ENCODE measurements at regions of chr21 and their contacts with region 1.

Region 1: DNA sequence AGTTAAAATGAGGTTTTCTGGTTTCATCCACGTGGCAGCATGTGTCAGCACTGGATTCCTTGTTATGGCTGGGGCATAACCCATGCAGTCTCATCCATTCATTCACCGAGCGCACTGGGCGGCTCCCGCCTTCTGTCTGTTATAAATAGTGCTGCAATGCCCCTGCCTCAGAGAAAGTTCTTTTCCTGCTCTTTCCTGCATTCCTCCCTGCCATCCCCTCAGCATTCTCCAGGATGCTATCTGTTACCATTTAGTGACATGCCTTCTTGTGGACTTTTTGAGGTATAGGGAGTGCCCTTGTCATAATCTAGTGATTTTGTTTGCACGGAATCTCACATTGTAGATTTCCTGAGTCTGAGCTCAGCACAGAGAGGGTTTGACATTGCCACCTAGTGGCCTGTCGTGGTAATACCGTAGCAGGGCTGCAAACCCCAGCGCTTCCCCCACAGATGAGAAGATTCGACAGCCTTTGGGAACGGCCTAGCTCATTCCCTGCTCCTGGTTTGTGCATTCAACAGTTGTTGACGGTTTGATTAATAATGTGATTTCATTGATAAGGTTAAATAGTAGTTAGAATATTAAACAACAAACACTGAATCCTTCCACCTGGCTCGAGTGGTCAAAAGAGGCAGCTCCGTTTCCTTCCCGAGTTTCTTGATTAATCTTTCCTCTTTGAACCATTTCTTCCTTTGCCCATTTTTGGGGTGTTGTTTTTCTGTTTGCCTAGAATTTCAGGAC is 46.3 kb downstream of the UMODL1 start:
- DNase-seq: peak; percentile 49 to 80 (median 59)
- H3K4me3 ChIP-seq: no peak overlapping the region
- H3K4me3 Mint-ChIP-seq: peak overlapping the region in 3 of 7 donors; percentile 19 to 61 (median 55)
- H3K27ac ChIP-seq: no peak overlapping the region
- H3K27ac Mint-ChIP-seq: no peak overlapping the region
- H3K4me1 ChIP-seq: peaks cover 4% of the 10 kb centered on the region
- H3K4me1 Mint-ChIP-seq: peaks cover 5 to 11% (median 7%) of the 10 kb centered on the region in 3 donors
- H3K27me3 ChIP-seq: peaks cover 49% of the 10 kb centered on the region
- H3K27me3 Mint-ChIP-seq: peaks cover 32 to 86% of the 10 kb centered on the region in 2 donors

Region 2: DNA sequence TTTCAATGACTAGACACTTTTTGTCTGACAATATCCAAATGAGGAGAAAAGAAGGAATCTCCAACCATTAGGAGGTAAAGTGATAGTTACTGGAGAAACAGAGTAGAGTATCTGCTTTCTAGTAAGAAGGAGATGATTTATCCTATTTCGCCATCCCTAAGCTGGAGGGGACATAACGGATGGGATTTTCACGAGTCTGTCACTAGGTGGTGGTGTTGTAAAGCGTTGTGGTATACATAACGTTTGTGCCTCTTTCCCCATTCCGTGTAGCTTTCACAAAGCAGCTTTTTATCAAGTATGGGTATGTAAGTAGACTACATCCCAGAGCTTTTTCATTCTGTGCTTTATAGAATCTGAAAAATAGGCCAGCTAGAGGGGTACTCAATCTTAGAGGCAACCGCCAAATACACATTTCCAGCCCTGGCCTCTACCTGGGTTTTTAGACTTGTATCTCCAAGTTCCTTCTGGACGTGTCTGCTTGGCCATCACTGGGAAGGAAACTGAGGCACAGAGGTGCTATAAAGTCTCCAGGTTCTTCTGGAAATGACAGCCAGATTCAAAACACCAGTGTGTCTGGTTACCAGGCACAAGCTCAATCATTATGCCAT is 834.1 kb before region 1 on chr21:
- CTCF ChIA-PET with region 1: interaction called, 13 read pairs
- POLR2A ChIA-PET with region 1: no interaction called
- DNase-seq: peak in 4 of 5 donors; percentile 15 to 64 (median 56)
- H3K4me3 ChIP-seq: no peak overlapping the region
- H3K4me3 Mint-ChIP-seq: no peak overlapping the region
- H3K27ac ChIP-seq: no peak overlapping the region
- H3K27ac Mint-ChIP-seq: no peak overlapping the region
- H3K4me1 ChIP-seq: no peaks in the 10 kb centered on the region
- H3K4me1 Mint-ChIP-seq: no peaks in the 10 kb centered on the region
- H3K27me3 ChIP-seq: no peaks in the 10 kb centered on the region
- H3K27me3 Mint-ChIP-seq: peaks cover 6 to 32% of the 10 kb centered on the region in 2 donors

Region 3: DNA sequence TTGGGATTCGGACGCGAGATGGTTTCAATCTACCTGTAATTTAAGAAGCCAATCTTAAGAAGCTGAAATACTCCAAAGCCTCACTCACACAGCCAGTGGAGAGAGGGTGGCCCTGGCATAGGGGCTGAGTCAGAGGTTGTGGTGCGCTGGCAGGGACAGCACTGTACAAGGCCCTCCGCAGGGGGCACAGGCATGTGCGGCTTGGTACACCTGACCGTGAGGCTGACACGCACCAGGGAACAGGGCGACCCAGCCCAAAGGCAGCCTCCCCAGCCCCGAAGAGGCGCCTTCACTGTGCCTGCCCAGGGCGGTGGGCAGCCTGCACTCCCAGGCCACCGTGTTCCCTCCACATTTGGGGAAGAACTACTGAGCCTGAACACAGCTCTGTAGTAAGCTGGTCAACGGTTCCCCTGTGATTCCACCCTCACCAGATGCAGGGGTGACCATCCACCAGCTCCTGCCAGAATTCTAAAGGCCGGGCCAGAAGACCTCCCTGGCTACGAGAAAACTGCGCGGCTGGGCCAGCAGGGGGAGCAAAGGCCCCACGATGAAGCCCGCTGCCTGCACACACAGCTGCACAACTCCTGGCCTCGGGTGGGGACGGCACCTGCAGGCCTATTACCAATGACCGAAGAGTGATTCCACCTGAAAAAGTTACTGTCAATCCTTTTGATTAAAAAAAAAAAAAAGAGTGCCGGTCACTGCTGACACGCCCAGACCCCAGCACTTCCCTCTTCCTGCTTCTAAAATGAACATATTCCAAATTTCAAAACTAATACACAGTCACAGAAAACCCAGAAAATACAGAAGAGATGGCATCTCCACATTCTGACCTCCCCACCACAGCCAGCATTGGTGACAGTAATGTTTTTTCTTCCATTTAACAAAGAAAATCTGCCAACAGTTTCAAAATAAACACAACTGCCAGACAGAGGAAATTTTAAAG is 300.9 kb before region 1 on chr21:
- CTCF ChIA-PET with region 1: interaction called, 42 read pairs
- POLR2A ChIA-PET with region 1: interaction called, 5 read pairs
- DNase-seq: peak; percentile 18 to 64 (median 36)
- H3K4me3 ChIP-seq: no peak overlapping the region
- H3K4me3 Mint-ChIP-seq: no peak overlapping the region
- H3K27ac ChIP-seq: no peak overlapping the region
- H3K27ac Mint-ChIP-seq: peak overlapping the region in 2 of 8 donors; percentile 61 to 64
- H3K4me1 ChIP-seq: no peaks in the 10 kb centered on the region
- H3K4me1 Mint-ChIP-seq: peaks cover 0 to 7% (median 3%) of the 10 kb centered on the region in 3 donors
- H3K27me3 ChIP-seq: no peaks in the 10 kb centered on the region
- H3K27me3 Mint-ChIP-seq: no peaks in the 10 kb centered on the region

Region 4: DNA sequence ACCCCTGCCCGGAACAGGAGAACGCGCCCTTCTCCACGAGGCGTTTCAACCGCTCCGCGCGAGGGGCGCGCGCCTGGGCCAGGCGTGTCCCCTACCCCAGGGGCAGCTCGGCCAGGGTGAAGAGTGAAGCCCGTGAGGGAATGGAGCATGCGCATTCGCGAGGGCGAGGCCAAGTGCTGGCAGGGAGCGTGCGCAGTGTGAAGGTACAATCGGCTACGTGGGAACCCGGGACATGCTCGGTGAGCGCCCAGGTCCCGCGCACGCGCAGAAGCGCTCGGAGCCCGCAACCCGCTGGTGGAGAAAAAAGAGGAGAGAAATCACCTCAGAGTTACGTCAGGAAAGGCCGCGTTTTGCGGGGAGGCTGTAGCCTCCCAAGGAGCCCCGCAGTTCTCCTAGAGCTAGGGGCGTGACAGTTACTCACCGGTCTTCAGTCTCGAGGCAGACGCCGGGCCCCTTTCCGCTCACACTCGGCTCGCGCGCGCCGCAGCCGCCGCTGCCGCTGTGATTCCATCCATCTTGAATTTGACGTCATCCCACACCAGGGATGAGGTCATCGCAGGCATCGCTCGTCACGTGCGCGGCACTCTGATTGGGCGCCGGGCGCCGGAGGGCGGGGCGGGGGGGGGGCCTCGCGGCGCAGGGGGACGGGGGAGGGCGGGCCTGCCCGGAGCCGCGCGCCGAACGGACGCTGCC is 107.4 kb before region 1 on chr21 and contains the start of gene ZBTB21:
- CTCF ChIA-PET with region 1: interaction called, 10 read pairs
- POLR2A ChIA-PET with region 1: interaction called, 3 read pairs
- DNase-seq: peak; percentile 97 to 99 (median 98)
- H3K4me3 ChIP-seq: peak within 1 kb of the TSS; percentile 65
- H3K4me3 Mint-ChIP-seq: peak within 1 kb of the TSS; percentile 93 to 99 (median 97)
- H3K27ac ChIP-seq: peak within 1 kb of the TSS; percentile 98
- H3K27ac Mint-ChIP-seq: peak within 1 kb of the TSS; percentile 98 to 100 (median 100)
- H3K4me1 ChIP-seq: peaks cover 10% of the 10 kb centered on the region
- H3K4me1 Mint-ChIP-seq: peaks cover 10 to 37% (median 23%) of the 10 kb centered on the region in 3 donors
- H3K27me3 ChIP-seq: no peaks in the 10 kb centered on the region
- H3K27me3 Mint-ChIP-seq: peaks cover 0 to 6% of the 10 kb centered on the region in 2 donors
- total RNA-seq, gene ZBTB21: 39.0 to 43.6 TPM

Region 5: GRCh38 chr21:42187976-42188653 is 70.7 kb after region 1 on chr21:
- CTCF ChIA-PET with region 1: no interaction called
- POLR2A ChIA-PET with region 1: no interaction called
- DNase-seq: peak; percentile 69 to 91 (median 86)
- H3K4me3 ChIP-seq: peak overlapping the region; percentile 38
- H3K4me3 Mint-ChIP-seq: peak overlapping the region; percentile 34 to 83 (median 75)
- H3K27ac ChIP-seq: peak overlapping the region; percentile 58
- H3K27ac Mint-ChIP-seq: peak overlapping the region; percentile 85 to 98 (median 98)
- H3K4me1 ChIP-seq: peaks cover 94% of the 10 kb centered on the region
- H3K4me1 Mint-ChIP-seq: peaks cover 70 to 79% (median 77%) of the 10 kb centered on the region in 3 donors
- H3K27me3 ChIP-seq: no peaks in the 10 kb centered on the region
- H3K27me3 Mint-ChIP-seq: peaks cover 0 to 3% of the 10 kb centered on the region in 2 donors